ENCODE measurements at regions of chr19 and their contacts with region 1.

Region 1: GRCh38 chr19:17266975-17267788 is at the start of gene BABAM1:
- DNase-seq: peak; percentile 98 to 100 (median 98)
- ATAC-seq: peak; percentile 97
- H3K4me3 ChIP-seq: peak within 1 kb of the TSS; percentile 65
- H3K27ac ChIP-seq: peak within 1 kb of the TSS; percentile 82
- H3K4me1 ChIP-seq: peaks cover 3 to 18% of the 10 kb centered on the region in 2 experiments; a peak in 3 of 5 replicates
- H3K27me3 ChIP-seq: no peaks in the 10 kb centered on the region
- CTCF ChIP-seq: no peak
- EP300 ChIP-seq: no peak
- POLR2A ChIP-seq: peak; percentile 92
- RAD21 ChIP-seq: no peak
- polyA plus RNA-seq, gene BABAM1: 14.7 to 21.5 TPM

Region 2: DNA sequence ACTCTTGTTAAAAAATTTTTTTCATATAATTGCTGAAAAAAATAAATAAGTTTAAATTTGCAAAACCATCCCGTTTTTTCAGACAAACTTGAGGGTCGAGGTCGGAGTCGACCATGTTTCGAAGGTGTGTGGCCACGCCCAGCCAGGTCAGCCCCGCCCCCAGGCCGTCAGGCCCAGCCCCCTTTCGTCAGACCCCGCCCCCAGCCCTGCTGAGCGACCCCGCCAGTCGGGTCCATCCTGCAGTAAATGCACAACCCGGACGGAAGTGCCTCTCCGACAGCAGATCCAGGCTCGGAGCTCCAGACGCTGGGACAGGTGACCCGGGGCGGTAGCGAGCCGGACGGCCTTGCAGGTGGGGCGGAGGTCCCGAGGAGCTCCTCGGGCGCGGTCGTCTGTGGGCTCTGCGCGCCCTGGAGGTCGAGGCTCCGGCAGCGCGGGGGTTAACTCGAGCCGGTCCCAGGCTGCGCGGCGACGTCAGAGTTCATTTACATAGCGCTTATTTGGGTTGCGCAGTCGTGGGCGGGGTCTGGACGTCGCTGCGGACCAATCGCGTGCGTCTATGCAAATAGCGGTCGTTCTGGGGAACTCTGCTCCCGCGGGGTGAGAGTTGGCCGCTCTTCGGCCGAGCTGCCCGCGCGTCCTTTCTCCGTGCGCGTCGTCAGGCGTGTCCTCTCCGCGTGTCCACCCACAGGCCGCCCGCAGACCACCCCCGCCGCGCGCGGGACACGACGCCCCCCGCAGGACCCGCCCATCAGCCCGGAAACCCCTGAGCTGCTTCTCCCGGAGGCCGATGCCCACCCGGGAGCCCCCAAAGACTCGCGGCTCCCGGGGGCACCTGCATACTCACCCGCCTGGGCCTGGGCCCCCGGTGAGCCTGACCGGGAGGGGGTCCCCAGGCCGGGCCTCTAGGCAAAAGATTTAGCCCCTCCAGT is 40.9 kb before region 1 on chr19 and contains the start of gene OCEL1:
- CTCF ChIA-PET with region 1: no interaction called
- POLR2A ChIA-PET with region 1: interaction called, 4 read pairs
- in situ Hi-C with region 1: no loop called
- intact Hi-C with region 1: loop called (anchors 5 kb)
- DNase-seq: peak; percentile 87 to 99 (median 90)
- ATAC-seq: peak; percentile 95
- H3K4me3 ChIP-seq: peak within 1 kb of the TSS; percentile 76
- H3K27ac ChIP-seq: peak within 1 kb of the TSS; percentile 88
- H3K4me1 ChIP-seq: peaks cover 6 to 30% of the 10 kb centered on the region in 2 experiments; a peak in 4 of 5 replicates
- H3K27me3 ChIP-seq: no peaks in the 10 kb centered on the region
- CTCF ChIP-seq: no peak
- EP300 ChIP-seq: no peak
- POLR2A ChIP-seq: peak; percentile 91
- RAD21 ChIP-seq: no peak
- polyA plus RNA-seq, gene OCEL1: 8.0 to 10.7 TPM

Region 3: DNA sequence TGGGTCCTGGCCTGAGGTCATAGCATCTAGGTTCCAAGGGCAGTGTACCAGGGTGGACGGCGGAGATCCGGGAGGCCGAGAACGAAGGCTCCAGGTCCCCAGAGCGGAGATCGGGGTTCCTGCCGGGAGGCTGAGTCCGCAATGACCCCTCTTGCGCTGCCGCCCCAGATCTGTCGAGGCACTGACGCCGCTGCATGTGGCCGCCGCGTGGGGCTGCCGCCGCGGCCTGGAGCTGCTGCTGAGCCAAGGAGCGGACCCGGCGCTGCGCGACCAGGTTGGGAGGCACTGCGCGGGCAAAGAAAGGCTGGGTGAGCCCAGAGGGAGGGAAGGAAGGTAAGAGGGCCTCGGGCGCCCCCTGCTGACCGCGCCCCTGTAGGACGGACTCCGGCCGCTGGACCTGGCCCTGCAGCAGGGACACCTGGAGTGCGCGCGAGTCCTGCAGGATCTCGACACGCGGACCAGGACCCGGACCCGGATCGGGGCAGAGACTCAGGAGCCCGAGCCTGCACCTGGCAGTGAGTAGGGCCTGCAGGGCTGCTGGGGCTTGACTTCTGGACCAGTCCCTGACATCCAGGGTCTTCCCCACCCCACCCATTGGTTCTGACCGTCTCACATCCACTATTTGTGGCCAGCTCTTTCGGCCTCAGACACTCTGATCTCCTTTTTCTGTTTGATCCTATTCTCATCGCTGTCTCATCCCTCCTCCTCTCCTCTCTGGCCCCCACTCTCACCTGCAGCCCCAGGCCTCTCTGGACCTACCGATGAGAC is 15.5 kb after region 1 on chr19:
- CTCF ChIA-PET with region 1: no interaction called
- POLR2A ChIA-PET with region 1: interaction called, 12 read pairs
- in situ Hi-C with region 1: no loop called
- intact Hi-C with region 1: no loop called
- DNase-seq: peak; percentile 85 to 91 (median 88)
- ATAC-seq: peak; percentile 96
- H3K4me3 ChIP-seq: peak overlapping the region; percentile 51
- H3K27ac ChIP-seq: peak overlapping the region; percentile 58; the same call in 2 of the 3 replicates
- H3K4me1 ChIP-seq: peaks cover 2 to 31% of the 10 kb centered on the region in 2 experiments
- H3K27me3 ChIP-seq: no peaks in the 10 kb centered on the region
- CTCF ChIP-seq: peak; percentile 88 to 95 (median 94)
- EP300 ChIP-seq: no peak
- POLR2A ChIP-seq: 0 out of 2 replicates have a peak, but pooled peaks have one; percentile 32
- RAD21 ChIP-seq: peak; percentile 86 to 94